ENCODE measurements at regions of chr11 and their contacts with region 1.

Region 1: DNA sequence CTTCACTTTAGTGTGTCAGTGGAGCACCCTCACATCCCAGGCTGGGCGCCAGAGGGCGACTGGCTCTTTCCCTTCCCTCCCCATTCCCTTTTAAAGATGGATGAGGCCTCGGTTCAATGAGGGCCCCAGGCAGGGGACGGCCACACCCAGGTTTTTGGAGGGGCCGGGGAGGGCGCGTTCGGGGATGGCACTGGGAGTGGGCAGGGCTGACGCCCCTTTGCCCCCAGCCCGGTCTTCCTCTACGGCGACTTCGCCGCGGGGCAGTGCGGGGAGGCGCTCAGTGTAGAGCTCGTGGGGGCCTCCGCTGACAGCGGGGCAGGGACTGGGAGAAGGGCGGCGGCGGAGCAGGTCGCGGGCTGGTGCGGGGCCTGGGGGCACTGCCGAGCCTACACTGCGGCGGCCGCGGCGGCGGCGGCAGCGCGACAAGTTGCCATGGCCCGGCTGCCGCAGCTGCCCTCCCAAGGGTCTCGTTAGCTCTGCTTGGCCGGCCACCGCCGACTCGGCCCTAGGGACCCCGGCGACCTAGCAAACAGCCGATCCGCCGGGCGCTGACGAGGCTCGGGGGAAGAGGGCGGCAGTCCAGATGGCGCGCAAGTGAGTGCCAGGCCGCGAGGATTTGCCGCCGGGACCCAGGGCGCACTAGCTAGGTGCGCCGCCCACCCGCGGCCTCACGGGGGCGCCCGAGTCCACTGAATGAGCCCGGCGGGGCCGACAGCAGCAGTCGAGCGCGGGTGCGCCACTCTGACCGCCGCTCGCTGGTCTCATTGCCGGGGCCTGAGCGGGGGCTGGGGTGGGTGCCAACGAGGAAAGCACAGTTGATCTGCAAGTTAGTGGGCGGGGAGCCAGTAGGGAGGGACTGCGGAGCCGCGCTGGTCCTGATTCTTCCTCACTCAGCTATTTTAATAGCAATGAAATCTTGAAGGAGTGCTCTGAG is 92.7 kb downstream of the RRM1 start:
- H3K4me3 ChIP-seq: peak overlapping the region; percentile 64
- H3K27ac ChIP-seq: peak overlapping the region; percentile 64; the same call in 1 of the 2 replicates
- H3K4me1 ChIP-seq: no peaks in the 10 kb centered on the region
- CTCF ChIP-seq: peak; percentile 96

Region 2: GRCh38 chr11:3808861-3809623 is 378.3 kb before region 1 on chr11:
- CTCF ChIA-PET with region 1: no interaction called
- POLR2A ChIA-PET with region 1: no interaction called
- H3K4me3 ChIP-seq: peak overlapping the region; percentile 79
- H3K27ac ChIP-seq: peak overlapping the region; percentile 5; the same call in 1 of the 2 replicates
- H3K4me1 ChIP-seq: no peaks in the 10 kb centered on the region
- CTCF ChIP-seq: no peak

Region 3: DNA sequence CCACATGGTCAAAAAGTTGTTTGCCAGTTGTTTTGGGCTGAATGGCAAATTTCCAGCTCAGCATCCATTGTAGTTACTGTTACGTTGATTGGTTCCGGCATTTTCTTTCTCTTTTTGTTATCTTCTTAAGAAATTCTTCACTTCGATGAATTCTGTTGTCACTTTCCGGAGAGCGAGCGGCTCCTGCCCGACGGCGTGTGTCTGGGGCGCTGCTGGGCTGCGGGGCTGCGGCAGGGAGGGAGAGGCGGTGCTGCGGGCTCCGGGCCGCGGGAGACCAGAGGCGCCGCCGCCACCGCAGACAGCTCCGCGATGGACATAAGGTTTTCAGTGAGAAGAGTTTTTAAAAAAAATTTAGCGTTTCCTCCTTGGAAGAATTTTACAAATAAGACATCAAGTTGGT is 24.7 kb after region 1 on chr11:
- CTCF ChIA-PET with region 1: interaction called, 15 read pairs
- POLR2A ChIA-PET with region 1: no interaction called
- H3K4me3 ChIP-seq: no peak overlapping the region
- H3K27ac ChIP-seq: no peak overlapping the region
- H3K4me1 ChIP-seq: no peaks in the 10 kb centered on the region
- CTCF ChIP-seq: no peak

Region 4: GRCh38 chr11:4539603-4540219 is 352.4 kb after region 1 on chr11:
- CTCF ChIA-PET with region 1: interaction called, 111 read pairs
- POLR2A ChIA-PET with region 1: interaction called, 3 read pairs
- H3K4me3 ChIP-seq: no peak overlapping the region
- H3K27ac ChIP-seq: no peak overlapping the region
- H3K4me1 ChIP-seq: no peaks in the 10 kb centered on the region
- CTCF ChIP-seq: peak; percentile 26; the same call in 1 of the 2 replicates

Region 5: DNA sequence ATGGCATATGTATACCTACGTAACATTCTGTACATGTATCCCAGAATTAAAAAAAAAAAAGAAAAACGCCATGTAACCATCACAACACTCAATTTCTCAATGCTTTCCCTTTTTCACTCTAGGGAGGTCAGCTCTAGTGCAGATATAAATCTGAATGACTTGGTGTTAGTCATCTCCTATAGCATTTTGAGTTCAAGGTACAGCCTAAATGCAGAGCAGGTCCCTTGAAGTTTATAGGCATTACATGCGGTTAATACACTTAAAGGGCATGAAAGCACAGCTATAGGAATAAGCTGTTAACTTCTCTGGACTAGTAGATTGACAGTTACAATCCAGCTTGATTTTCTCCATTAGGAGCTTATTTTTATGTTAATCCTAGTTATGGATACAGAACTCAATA is 378.0 kb after region 1 on chr11:
- CTCF ChIA-PET with region 1: interaction called, 16 read pairs
- POLR2A ChIA-PET with region 1: no interaction called
- H3K4me3 ChIP-seq: no peak overlapping the region
- H3K27ac ChIP-seq: no peak overlapping the region
- H3K4me1 ChIP-seq: no peaks in the 10 kb centered on the region
- CTCF ChIP-seq: no peak

Region 6: GRCh38 chr11:4607781-4608666 is 420.7 kb after region 1 on chr11 and contains the start of gene TRIM68:
- CTCF ChIA-PET with region 1: interaction called, 12 read pairs
- POLR2A ChIA-PET with region 1: interaction called, 8 read pairs
- H3K4me3 ChIP-seq: peak within 1 kb of the TSS; percentile 62
- H3K27ac ChIP-seq: peak within 1 kb of the TSS; percentile 84
- H3K4me1 ChIP-seq: 0 out of 2 replicates have a peak, but pooled peaks cover 3% of the 10 kb centered on the region
- CTCF ChIP-seq: no peak